MCF 10A (cell line): ENCODE measurements at regions of chr5 and their contacts with region 1.

Region 1: GRCh38 chr5:73792687-73793320 is 166.8 kb downstream of the ARHGEF28 start:
- DNase-seq: peak; percentile 79
- H3K4me3 Mint-ChIP-seq: no peak overlapping the region
- H3K27ac Mint-ChIP-seq: no peak overlapping the region
- H3K4me1 Mint-ChIP-seq: peaks cover 13% of the 10 kb centered on the region
- H3K27me3 Mint-ChIP-seq: no peaks in the 10 kb centered on the region
- CTCF ChIP-seq: peak; percentile 96

Region 2: GRCh38 chr5:72020320-72021009 is 1772.3 kb before region 1 on chr5:
- CTCF ChIA-PET with region 1: no interaction called
- POLR2A ChIA-PET with region 1: no interaction called
- intact Hi-C with region 1: no loop called
- DNase-seq: no peak
- H3K4me3 Mint-ChIP-seq: no peak overlapping the region
- H3K27ac Mint-ChIP-seq: no peak overlapping the region
- H3K4me1 Mint-ChIP-seq: no peaks in the 10 kb centered on the region
- H3K27me3 Mint-ChIP-seq: peaks cover 23% of the 10 kb centered on the region
- CTCF ChIP-seq: no peak

Region 3: DNA sequence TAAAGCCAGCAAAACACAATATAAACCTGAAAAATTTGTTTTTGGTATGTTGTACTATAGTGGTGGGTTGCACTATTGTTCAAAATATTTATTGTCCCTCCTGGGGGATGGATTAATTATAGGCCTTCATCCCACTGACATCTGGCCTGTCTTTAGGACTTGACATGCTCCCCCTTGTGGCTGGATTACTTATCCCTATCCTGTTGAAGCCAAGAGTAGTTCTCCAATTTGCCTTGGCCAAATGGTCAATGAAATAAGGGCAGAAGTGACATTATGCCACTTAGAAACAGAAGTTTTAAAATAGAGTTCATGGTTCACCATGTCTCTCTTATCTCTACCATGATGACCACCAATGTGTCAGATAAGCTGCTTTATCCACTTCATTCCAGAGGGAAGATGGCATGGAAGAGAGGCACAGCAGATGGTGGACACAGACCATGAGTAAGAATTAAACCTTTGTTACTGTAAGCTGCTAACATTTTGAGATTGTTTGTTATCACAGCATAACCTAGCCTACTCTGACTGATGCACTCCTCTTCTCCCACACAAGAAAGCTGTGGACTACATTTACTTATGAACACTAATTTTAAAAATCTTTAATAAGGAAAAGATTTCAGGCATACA is 196.0 kb before region 1 on chr5:
- CTCF ChIA-PET with region 1: interaction called, 298 read pairs
- POLR2A ChIA-PET with region 1: interaction called, 21 read pairs
- intact Hi-C with region 1: no loop called
- DNase-seq: peak; percentile 63
- H3K4me3 Mint-ChIP-seq: no peak overlapping the region
- H3K27ac Mint-ChIP-seq: no peak overlapping the region
- H3K4me1 Mint-ChIP-seq: peaks cover 13% of the 10 kb centered on the region
- H3K27me3 Mint-ChIP-seq: no peaks in the 10 kb centered on the region
- CTCF ChIP-seq: peak; percentile 53